ENCODE measurements at regions of chr20 and their contacts with region 1.

Region 1: DNA sequence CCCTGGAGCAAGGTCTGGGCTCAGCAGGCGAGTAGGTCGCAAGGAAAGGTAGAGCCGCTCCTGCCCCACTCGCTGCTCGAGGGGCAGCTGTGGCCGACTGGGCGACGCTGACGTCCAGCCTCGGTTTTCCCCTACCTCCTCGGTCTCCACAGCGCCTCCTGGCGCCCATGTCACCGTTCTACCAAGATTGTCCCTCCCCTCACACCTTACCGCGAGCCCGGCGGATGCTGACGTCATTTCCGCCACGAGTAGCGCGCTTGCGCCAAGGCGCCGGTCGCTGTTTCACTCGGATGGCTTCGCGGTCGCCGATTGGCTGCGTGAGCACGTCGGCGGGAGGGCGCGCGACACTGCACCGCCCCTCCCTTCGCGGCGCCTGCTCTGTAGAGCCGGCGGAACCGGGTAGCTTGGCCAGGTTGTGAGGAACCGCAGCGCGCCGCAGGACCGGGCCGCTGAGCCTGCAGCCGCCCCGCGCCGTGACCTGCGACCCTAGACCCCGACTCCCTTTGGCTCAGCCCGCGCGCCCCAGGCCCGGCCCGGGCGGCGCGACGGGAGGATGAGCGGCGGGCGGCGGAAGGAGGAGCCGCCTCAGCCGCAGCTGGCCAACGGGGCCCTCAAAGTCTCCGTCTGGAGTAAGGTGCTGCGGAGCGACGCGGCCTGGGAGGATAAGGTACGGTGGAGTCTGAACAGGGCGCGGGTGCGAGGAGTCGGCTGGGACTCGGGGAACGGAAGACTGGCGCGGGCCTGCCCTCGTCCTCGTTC is at the start of gene RAB5IF:
- DNase-seq: peak; percentile 100
- ATAC-seq: peak; percentile 92
- H3K4me3 Mint-ChIP-seq: peak within 1 kb of the TSS; percentile 98
- H3K27ac Mint-ChIP-seq: peak within 1 kb of the TSS; percentile 96
- H3K4me1 Mint-ChIP-seq: peaks cover 27% of the 10 kb centered on the region
- H3K27me3 Mint-ChIP-seq: no peaks in the 10 kb centered on the region
- total RNA-seq, gene RAB5IF: 81.8 to 115 TPM

Region 2: GRCh38 chr20:36562724-36563123 is 42.9 kb before region 1 on chr20:
- CTCF ChIA-PET with region 1: interaction called, 10 read pairs
- DNase-seq: no peak
- ATAC-seq: no peak
- H3K4me3 Mint-ChIP-seq: no peak overlapping the region
- H3K27ac Mint-ChIP-seq: no peak overlapping the region
- H3K4me1 Mint-ChIP-seq: peaks cover 9% of the 10 kb centered on the region
- H3K27me3 Mint-ChIP-seq: no peaks in the 10 kb centered on the region

Region 3: DNA sequence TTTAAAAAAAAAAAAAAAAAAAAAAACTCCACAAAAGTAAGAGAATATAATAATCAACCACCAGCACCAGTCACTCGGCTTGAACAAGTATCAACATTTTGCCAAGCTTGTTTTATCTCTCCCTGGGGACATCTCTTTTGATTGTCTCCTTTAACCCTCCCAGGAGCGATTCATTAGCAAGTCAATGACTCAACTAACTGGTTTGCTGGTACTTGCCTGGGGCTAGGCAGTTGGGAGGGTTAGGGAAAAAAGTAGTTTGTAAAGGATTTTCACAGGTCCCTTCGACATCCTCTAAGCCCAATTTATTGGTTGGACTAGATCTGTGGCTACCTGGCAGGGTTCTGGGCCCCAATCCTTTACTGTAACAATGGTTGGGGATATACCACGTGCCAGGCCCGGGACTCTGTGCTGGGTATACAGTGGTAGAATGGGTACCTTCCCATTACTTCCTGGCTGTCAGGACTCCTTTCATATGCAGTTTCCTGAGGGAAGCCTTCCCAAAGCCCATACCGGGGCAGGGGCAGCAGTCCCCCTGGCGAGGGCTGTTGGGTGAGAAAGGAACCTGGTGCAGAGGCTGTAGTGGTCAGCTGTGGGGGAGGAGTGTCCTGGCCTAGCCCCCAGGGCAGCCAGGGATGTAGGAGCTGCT is 20.0 kb before region 1 on chr20:
- CTCF ChIA-PET with region 1: interaction called, 50 read pairs
- DNase-seq: no peak
- ATAC-seq: no peak
- H3K4me3 Mint-ChIP-seq: no peak overlapping the region
- H3K27ac Mint-ChIP-seq: no peak overlapping the region
- H3K4me1 Mint-ChIP-seq: peaks cover 45% of the 10 kb centered on the region
- H3K27me3 Mint-ChIP-seq: no peaks in the 10 kb centered on the region

Region 4: DNA sequence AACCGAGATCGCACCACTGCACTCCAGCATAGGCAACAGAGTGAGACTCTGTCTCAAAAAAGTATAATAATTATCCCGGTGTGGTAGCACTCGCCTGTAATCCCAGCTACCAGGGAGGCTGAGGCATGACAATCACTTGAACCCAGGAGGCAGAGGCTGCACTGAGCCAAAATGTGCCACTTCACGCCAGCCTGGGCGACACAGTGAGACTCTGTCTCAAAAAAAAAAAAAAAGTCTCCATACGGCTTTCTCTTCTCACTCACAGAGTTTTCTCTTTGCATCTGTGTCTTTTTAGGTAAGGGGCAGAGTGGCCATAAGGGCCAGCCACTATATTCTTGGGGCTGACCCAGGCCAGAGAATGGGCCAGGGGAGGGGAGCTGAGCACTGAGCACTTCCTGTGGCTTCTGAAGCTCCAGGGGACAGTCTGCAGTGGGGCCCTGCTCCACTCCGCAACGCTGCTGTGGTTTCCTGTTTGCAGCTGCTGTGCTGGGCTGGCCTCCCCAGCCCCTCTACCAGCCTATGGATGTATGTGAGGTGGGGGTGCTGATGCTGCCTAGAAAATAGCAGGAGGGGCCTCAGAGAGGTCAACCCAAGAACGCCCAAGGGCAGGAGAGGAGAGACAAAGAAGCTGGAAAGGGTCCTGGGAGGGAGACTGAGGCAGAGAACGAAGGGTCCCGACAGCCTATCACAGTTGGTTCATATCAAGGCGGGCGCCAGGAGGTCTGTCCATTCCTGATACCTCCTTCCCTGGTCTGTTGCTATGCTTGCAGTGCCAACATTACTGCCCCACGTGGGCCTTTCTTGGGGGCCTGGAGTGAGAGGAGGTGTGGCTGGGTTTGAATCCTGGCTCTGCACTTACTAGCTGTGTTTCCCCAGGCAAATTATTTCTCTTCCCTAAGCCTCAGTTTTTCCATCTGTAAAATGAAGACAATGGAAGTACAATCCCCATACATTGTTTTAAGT is 24.4 kb after region 1 on chr20:
- CTCF ChIA-PET with region 1: interaction called, 22 read pairs
- DNase-seq: peak; percentile 83
- ATAC-seq: peak; percentile 89
- H3K4me3 Mint-ChIP-seq: peak overlapping the region; percentile 64
- H3K27ac Mint-ChIP-seq: peak overlapping the region; percentile 96
- H3K4me1 Mint-ChIP-seq: peaks cover 64% of the 10 kb centered on the region
- H3K27me3 Mint-ChIP-seq: no peaks in the 10 kb centered on the region

Region 5: GRCh38 chr20:36728986-36729385 is 123.4 kb after region 1 on chr20:
- CTCF ChIA-PET with region 1: interaction called, 16 read pairs
- DNase-seq: peak; percentile 49
- ATAC-seq: peak; percentile 61
- H3K4me3 Mint-ChIP-seq: no peak overlapping the region
- H3K27ac Mint-ChIP-seq: peak overlapping the region; percentile 45
- H3K4me1 Mint-ChIP-seq: peaks cover 31% of the 10 kb centered on the region
- H3K27me3 Mint-ChIP-seq: no peaks in the 10 kb centered on the region

Measured in activated CD8-positive, alpha-beta memory T cell treated with anti-CD3 and anti-CD28 coated beads, Interleukin-2, amount 10 ng/mL, durations not matched to agents 7 days and 5 days (primary cell).